Lower leg skin (tissue), 4 donors: ENCODE measurements at regions of chr2 and their contacts with region 1.

Region 1: DNA sequence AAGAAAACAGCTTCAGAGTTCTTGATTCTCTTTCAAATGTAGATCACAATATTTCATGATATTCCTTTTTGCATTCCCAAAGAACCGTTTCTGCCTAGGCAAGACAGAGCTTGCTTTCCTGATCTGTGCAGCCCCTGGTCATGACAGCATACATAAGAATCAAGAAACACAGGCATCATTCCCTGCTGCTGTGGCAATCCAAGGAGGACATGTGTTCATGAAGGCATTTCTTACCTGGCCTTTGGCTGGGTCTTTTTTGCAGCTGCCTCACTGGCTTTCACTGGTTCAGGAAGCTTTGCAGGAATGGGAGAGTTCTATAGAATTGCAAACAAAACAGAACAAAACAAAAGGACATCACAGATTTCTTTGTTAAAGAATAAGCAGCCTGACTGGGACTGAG is 87.6 kb upstream of the NFU1 start:
- DNase-seq: no peak
- H3K4me3 ChIP-seq: no peak overlapping the region
- CTCF ChIP-seq: no peak
- POLR2A ChIP-seq: no peak

Region 2: GRCh38 chr2:70546376-70546775 is 1021.6 kb after region 1 on chr2:
- intact Hi-C with region 1: loop called (anchors 5 kb)
- DNase-seq: no peak
- H3K4me3 ChIP-seq: no peak overlapping the region
- CTCF ChIP-seq: no peak
- POLR2A ChIP-seq: no peak